ENCODE measurements at regions of chr1 and their contacts with region 1.

Region 1: DNA sequence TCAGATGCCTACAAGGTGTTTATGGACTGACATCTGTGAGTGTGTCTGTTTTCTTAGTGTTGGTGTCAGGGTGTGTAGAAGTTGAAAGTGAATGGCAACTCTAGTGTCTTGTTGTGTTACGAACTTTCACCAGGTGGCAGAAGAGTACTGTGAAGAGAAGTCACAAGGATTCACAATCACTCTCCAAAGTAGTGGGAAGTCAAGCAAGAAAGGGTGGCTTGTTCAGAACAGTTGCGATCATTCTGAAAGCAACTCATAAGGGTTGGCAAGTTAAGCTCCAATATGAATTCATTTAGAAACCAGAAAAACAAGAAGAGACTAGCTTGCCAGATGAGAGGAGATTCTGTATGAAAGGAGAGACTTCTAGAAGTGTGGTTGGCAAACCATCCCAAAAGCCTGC is 86.1 kb downstream of the FASLG start:
- DNase-seq: peak; percentile 40
- H3K4me3 ChIP-seq: no peak overlapping the region
- CTCF ChIP-seq: peak; percentile 61

Region 2: GRCh38 chr1:172239901-172240300 is 505.1 kb before region 1 on chr1:
- CTCF ChIA-PET with region 1: no interaction called
- POLR2A ChIA-PET with region 1: no interaction called
- DNase-seq: no peak
- H3K4me3 ChIP-seq: no peak overlapping the region
- CTCF ChIP-seq: no peak

Region 3: GRCh38 chr1:172398970-172399755 is 345.9 kb before region 1 on chr1:
- CTCF ChIA-PET with region 1: no interaction called
- POLR2A ChIA-PET with region 1: no interaction called
- DNase-seq: peak; percentile 89
- H3K4me3 ChIP-seq: no peak overlapping the region
- CTCF ChIP-seq: peak; percentile 23

Region 4: GRCh38 chr1:172727956-172728603 is 16.9 kb before region 1 on chr1:
- CTCF ChIA-PET with region 1: interaction called, 36 read pairs
- POLR2A ChIA-PET with region 1: no interaction called
- DNase-seq: no peak
- H3K4me3 ChIP-seq: no peak overlapping the region
- CTCF ChIP-seq: no peak

Region 5: GRCh38 chr1:172764378-172764777 is 19.4 kb after region 1 on chr1:
- CTCF ChIA-PET with region 1: interaction called, 11 read pairs
- POLR2A ChIA-PET with region 1: no interaction called
- DNase-seq: no peak
- H3K4me3 ChIP-seq: no peak overlapping the region
- CTCF ChIP-seq: no peak

Region 6: GRCh38 chr1:172826096-172826743 is 81.2 kb after region 1 on chr1:
- CTCF ChIA-PET with region 1: interaction called, 17 read pairs
- POLR2A ChIA-PET with region 1: interaction called, 3 read pairs
- DNase-seq: peak; percentile 71
- H3K4me3 ChIP-seq: no peak overlapping the region
- CTCF ChIP-seq: peak; percentile 58

Region 7: GRCh38 chr1:173202430-173203145 is 457.6 kb after region 1 on chr1:
- CTCF ChIA-PET with region 1: interaction called, 154 read pairs
- POLR2A ChIA-PET with region 1: no interaction called
- DNase-seq: peak; percentile 69
- H3K4me3 ChIP-seq: no peak overlapping the region
- CTCF ChIP-seq: peak; percentile 56

Region 8: DNA sequence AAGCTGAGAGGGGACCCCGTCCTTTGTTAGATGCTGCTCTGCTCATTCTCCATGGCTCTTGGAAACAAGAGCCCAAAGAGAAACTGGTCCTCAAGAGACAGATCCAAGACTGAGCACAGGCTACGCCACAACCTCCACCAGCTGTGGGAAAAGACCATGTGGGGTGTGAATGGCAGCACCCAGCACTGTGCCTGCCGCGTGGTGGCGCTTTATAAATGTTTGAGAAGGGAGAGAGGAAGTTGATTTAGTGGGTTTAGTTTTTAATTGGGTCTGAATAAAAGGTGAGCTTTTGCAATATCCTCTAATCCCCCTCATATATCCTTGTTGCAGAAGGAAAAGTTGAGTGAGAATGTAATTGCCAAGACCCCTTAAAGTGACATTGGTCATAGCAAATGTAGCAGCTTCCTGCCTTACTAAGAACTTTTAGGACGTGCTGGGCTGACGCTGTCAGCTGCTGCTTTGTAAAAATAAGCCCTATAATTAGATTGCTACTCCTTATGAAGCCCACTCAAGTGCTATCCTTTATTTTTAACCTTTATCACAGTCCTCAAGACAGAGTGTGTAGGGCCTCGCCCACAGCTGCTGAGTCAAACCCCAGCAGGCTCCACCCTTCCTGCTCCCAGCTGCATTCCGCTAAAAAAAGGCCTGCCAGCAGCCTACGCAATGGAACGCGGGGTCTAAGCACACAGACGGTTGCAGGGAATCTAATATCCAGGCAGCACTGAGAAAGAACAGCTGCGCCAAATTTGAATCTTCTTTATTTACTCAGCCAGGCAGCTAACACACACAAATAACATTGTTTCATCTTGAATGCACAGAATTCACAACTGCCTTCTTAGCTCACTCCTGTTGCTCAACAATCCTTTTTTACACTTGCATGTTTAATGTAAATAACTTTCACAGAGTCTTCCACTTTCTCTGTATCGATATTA is 684.7 kb after region 1 on chr1:
- CTCF ChIA-PET with region 1: interaction called, 184 read pairs
- POLR2A ChIA-PET with region 1: no interaction called
- DNase-seq: peak; percentile 63
- H3K4me3 ChIP-seq: peak overlapping the region; percentile 38
- CTCF ChIP-seq: peak; percentile 74